Heart left ventricle (tissue), 16 donors: ENCODE measurements at regions of chr11 and their contacts with region 1.

Region 1: DNA sequence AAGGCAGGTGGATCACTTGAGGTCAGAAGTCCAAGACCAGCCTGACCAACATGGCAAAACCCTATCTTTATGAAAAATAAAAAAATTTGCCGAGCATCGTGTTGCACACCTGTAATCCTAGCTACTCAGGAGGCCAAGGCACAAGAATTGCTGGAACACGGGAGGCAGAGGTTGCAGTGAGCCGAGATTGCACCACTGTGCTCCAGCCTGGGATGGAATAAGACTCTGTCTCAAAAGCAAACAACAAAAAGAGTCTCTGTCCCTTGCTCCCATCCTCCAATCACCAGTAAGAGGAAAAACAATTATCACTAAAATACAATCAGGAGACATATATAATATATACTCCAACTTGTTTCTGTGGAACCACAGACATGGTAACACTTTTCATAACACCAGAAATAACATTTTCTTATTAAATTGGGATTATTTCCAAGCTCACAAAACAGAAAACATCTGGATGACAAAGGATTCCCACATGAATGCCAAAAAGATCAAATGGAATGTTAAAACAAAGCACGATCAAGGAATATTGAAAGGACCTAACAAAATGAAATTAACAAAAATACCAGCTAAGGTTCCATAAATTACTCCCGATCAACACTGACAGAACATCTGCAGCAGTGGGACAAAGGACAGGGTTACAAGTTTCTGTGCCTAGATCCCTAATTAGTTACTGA is 15.2 kb downstream of the FCHSD2 start:
- DNase-seq: no peak
- ATAC-seq: no peak
- H3K4me3 ChIP-seq: no peak overlapping the region
- H3K27ac ChIP-seq: peak overlapping the region in 3 of 12 donors; percentile 2 to 7 (median 4)
- H3K4me1 ChIP-seq: peaks cover 0 to 30% (median 8%) of the 10 kb centered on the region in 12 donors
- H3K27me3 ChIP-seq: no peaks in the 10 kb centered on the region
- CTCF ChIP-seq: no peak
- POLR2A ChIP-seq: no peak

Region 2: DNA sequence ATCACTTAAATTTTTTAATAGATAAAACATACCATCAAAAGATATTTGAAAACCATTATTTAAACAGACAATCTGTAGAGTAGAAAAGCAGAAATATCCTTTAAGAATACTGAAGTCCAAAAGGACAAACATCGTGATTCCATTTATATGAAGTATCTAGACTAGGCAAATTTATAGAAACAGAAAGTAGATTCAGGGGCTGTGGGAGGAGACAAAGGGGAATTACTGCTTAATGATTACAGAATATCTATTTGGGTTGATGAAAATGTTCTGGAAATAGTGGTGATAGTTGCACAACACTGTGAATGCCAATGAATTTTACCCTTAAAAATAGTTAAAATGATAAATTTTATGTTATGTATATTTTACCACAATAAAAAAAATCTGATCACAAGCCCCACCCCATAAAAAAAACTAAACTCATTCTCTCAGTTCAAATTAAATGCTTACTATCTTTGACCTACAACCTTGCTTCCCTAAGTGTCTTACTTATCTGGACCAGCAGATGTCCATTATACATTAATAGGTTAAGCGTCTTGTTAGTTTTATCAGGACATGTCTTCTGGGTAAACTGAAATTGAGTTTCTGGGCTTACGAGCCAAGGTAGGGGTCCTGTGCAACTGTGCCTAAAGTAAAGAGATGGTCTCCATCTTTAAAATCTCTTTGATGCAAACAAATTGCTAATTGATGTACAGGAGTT is 71.1 kb before region 1 on chr11:
- intact Hi-C with region 1: no loop called
- DNase-seq: no peak
- ATAC-seq: no peak
- H3K4me3 ChIP-seq: no peak overlapping the region
- H3K27ac ChIP-seq: no peak overlapping the region
- H3K4me1 ChIP-seq: peaks cover 0 to 40% (median 17%) of the 10 kb centered on the region in 12 donors
- H3K27me3 ChIP-seq: no peaks in the 10 kb centered on the region
- CTCF ChIP-seq: no peak
- POLR2A ChIP-seq: no peak

Region 3: GRCh38 chr11:73072901-73073481 is 54.0 kb before region 1 on chr11:
- intact Hi-C with region 1: loop called in 1 of 10 experiments (anchors 10 kb)
- DNase-seq: no peak
- ATAC-seq: peak; percentile 77 to 84 (median 82)
- H3K4me3 ChIP-seq: peak overlapping the region in 8 of 12 donors; percentile 1 to 18 (median 8)
- H3K27ac ChIP-seq: peak overlapping the region; percentile 4 to 61 (median 25)
- H3K4me1 ChIP-seq: peaks cover 5 to 51% (median 30%) of the 10 kb centered on the region in 12 donors
- H3K27me3 ChIP-seq: no peaks in the 10 kb centered on the region
- CTCF ChIP-seq: no peak
- POLR2A ChIP-seq: no peak

Region 4: GRCh38 chr11:73085189-73085875 is 41.6 kb before region 1 on chr11:
- intact Hi-C with region 1: loop called in 1 of 10 experiments (anchors 5 kb)
- DNase-seq: no peak
- ATAC-seq: peak in 3 of 4 donors; percentile 78 to 81 (median 80)
- H3K4me3 ChIP-seq: no peak overlapping the region
- H3K27ac ChIP-seq: peak overlapping the region in 6 of 12 donors; percentile 7 to 80 (median 34)
- H3K4me1 ChIP-seq: peaks cover 0 to 47% (median 6%) of the 10 kb centered on the region in 12 donors
- H3K27me3 ChIP-seq: no peaks in the 10 kb centered on the region
- CTCF ChIP-seq: no peak
- POLR2A ChIP-seq: no peak

Region 5: DNA sequence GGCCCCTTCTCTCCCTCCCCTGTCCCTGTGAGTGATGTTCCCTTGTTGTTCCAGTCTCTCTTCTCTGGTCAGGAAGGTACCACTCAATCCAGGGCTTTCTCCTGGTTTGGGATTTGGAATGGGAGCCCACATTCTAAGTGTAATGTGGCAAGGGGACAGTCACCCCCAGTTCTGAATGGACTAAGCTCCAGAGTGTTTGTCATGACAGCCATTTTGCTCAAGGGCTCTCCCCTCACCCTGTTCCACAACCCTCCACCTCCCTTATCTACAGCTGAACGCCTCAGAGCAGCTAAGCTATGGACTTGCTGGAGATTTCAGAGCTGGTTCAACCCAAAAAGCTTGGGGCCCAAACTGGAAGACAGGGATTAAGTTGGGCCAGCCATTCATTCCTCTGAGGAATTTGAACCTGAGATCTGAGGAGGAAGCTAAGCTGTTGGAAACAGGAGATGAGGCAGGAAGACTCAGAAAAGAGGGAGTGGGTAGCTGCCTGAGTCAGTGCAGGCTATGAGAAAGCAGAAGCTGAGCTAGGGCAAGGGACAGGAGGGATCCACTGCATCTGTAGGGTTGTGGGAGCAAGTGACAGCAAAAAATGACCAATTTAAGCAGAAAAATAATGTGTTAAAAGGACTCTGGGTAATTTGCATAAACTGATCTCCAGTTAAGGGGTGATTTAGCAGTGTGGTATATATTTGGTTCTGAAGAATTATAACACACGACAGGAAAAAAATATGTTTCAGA is 38.0 kb after region 1 on chr11:
- intact Hi-C with region 1: no loop called
- DNase-seq: no peak
- ATAC-seq: no peak
- H3K4me3 ChIP-seq: no peak overlapping the region
- H3K27ac ChIP-seq: no peak overlapping the region
- H3K4me1 ChIP-seq: peaks cover 0 to 57% (median 28%) of the 10 kb centered on the region in 12 donors
- H3K27me3 ChIP-seq: no peaks in the 10 kb centered on the region
- CTCF ChIP-seq: no peak
- POLR2A ChIP-seq: no peak

Region 6: DNA sequence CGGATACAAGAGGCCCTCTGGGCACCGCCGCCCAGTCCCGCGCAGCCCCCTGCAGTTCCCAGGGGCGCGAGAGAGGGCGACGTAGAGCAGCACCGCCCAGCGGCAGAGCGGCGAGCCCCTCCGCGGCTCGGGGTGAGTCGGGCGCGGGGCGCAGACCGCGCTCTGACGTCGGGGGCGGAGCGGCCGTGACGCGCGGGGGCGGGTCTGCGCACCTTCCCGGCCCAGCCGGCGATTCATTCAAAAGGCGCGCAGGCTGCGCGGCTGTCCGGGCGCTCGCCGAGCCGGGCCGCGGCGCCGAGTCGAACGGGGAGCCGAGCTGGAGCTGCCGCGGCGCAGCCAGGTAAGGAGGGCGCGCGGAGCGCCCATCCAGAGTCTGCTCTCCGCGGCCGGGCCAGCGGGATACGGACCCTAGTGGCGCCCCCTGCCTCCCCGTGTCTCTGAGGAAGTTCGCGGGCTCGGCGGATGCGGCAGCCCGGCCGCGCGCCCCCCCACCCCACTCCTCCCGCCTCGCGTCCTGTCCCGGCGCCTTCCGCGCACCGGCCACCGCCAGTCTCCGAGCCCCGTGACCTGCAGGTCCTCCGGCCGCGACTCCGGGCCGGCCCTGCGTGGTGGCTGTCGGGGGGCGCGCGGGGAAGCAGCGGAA is 249.3 kb after region 1 on chr11 and contains the start of gene RELT:
- intact Hi-C with region 1: no loop called
- DNase-seq: peak; percentile 89 to 96 (median 91)
- ATAC-seq: peak; percentile 73 to 91 (median 90)
- H3K4me3 ChIP-seq: peak within 1 kb of the TSS; percentile 58 to 92 (median 73)
- H3K27ac ChIP-seq: peak within 1 kb of the TSS in 11 of 12 donors; percentile 52 to 92 (median 82)
- H3K4me1 ChIP-seq: peaks cover 0 to 59% (median 39%) of the 10 kb centered on the region in 12 donors
- H3K27me3 ChIP-seq: no peaks in the 10 kb centered on the region
- CTCF ChIP-seq: peak; percentile 77 to 98 (median 93)
- POLR2A ChIP-seq: peak; percentile 68 to 97
- total RNA-seq, gene RELT: 1.0 to 13.9 (median 2.6) TPM

Region 7: GRCh38 chr11:73729594-73730206 is 602.8 kb after region 1 on chr11:
- intact Hi-C with region 1: no loop called
- DNase-seq: no peak
- ATAC-seq: no peak
- H3K4me3 ChIP-seq: no peak overlapping the region
- H3K27ac ChIP-seq: no peak overlapping the region
- H3K4me1 ChIP-seq: peaks cover 0 to 4% (median under 1%) of the 10 kb centered on the region in 12 donors
- H3K27me3 ChIP-seq: no peaks in the 10 kb centered on the region
- CTCF ChIP-seq: peak in 6 of 12 donors; percentile 9 to 38 (median 32)
- POLR2A ChIP-seq: no peak